Caco-2 (cell line): ENCODE measurements at regions of chr19 and their contacts with region 1.

Region 1: GRCh38 chr19:57819475-57820148 is 4.9 kb upstream of the ZNF552 start:
- DNase-seq: peak; percentile 89 to 95
- H3K4me3 ChIP-seq: peak overlapping the region; percentile 48
- H3K4me3 Mint-ChIP-seq: peak overlapping the region; percentile 98
- H3K27ac Mint-ChIP-seq: peak overlapping the region; percentile 94
- H3K4me1 ChIP-seq: peaks cover 59% of the 10 kb centered on the region
- H3K4me1 Mint-ChIP-seq: peaks cover 62% of the 10 kb centered on the region
- H3K27me3 ChIP-seq: no peaks in the 10 kb centered on the region
- H3K27me3 Mint-ChIP-seq: no peaks in the 10 kb centered on the region
- CTCF ChIP-seq: peak in 1 of 2 experiments; percentile 16

Region 2: DNA sequence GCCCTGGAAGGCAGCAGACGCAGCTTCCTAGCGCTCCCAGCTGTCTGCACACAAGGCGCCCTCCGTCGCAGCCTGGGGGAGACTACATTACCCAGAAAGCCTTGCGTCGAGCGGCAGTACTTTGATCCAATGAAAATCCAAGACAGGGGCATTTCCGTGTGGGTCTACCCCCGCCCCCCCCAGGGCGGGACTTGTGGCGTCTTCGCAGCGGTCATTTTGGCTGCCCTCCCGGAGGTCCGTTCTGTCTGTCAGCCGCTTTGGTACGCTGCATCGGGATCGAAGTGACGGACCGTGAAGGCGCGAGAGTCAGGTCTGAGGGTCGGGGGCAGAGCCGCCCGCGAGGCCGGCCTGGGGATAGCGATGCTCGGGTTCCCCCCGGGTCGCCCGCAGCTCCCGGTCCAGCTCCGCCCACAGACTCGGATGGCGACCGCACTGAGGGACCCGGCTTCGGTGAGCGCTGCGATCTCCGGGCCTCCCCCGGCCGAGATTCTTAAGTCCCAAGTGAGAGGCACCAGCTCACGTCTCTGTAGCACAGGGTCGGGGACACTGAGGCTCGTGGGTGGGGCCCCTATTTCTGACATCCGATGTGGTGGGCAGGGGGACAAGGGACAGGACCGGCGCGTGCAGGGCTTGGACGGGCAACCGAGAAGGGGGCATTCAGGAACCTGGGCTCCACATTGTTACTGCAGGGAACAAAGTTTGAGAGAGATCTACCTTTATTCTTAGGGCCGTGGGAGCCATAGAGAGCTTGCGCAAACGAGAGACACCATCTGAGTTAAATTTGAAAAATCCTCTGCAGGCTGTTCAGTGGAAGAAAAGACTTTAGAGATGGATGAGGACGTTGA is 186.4 kb before region 1 on chr19 and contains the start of gene ZNF211:
- CTCF ChIA-PET with region 1: no interaction called
- POLR2A ChIA-PET with region 1: no interaction called
- intact Hi-C with region 1: no loop called
- DNase-seq: peak; percentile 94
- H3K4me3 ChIP-seq: peak within 1 kb of the TSS; percentile 95
- H3K4me3 Mint-ChIP-seq: peak within 1 kb of the TSS; percentile 86
- H3K27ac Mint-ChIP-seq: peak within 1 kb of the TSS; percentile 81
- H3K4me1 ChIP-seq: 0 out of 2 replicates have a peak, but pooled peaks cover 7% of the 10 kb centered on the region
- H3K4me1 Mint-ChIP-seq: peaks cover 12% of the 10 kb centered on the region
- H3K27me3 ChIP-seq: no peaks in the 10 kb centered on the region
- H3K27me3 Mint-ChIP-seq: no peaks in the 10 kb centered on the region
- CTCF ChIP-seq: no peak
- total RNA-seq, gene ZNF211: 10.5 and 13.3 TPM in 2 replicates

Region 3: GRCh38 chr19:57689750-57690149 is 129.9 kb before region 1 on chr19:
- CTCF ChIA-PET with region 1: no interaction called
- POLR2A ChIA-PET with region 1: no interaction called
- intact Hi-C with region 1: no loop called
- DNase-seq: no peak
- H3K4me3 ChIP-seq: no peak overlapping the region
- H3K4me3 Mint-ChIP-seq: no peak overlapping the region
- H3K27ac Mint-ChIP-seq: no peak overlapping the region
- H3K4me1 ChIP-seq: no peaks in the 10 kb centered on the region
- H3K4me1 Mint-ChIP-seq: no peaks in the 10 kb centered on the region
- H3K27me3 ChIP-seq: no peaks in the 10 kb centered on the region
- H3K27me3 Mint-ChIP-seq: no peaks in the 10 kb centered on the region
- CTCF ChIP-seq: no peak

Region 4: DNA sequence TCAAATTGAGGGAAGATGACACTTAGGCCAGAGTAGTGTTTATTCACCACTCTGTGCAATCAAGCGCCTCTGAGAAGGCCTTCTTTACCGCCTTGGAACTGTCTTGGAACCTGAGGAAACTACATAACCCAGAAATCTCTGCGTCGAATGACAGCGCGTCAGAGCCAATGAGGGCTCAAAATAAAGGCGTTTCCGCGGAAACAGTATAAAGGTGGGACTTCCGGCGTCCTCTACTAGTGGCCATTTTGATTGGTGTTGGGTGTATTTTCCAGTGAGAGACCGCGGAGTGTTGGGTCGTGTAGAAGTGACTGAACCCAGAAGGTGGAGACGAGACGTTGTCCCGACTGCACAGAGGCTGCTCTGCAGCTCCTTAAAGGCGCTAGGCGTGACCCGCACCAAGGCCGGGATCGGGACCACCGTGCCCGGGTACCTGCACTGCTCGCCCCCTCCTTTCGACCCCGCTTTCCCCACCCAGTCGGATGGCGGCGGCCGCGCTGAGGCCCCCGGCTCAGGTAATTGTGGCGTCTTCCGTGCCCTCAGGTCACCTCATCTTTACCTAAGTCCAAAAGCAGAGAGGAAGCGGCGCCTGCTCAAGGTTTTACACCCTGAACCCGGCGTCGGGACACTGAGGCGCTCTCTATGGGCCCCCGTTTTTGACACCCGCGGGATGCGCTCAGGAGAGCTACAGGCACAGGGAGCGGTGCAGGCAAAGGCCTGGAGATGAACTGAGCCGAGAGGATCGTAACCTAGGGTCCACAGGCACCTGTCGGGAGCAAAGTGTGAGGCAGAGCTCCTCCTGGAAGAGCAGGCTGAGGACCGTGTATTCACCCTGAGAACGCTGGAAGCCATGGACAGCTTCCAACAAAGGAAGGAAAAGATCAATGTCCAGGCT is 72.8 kb before region 1 on chr19 and contains the start of gene ZNF776:
- CTCF ChIA-PET with region 1: no interaction called
- POLR2A ChIA-PET with region 1: interaction called, 7 read pairs
- intact Hi-C with region 1: loop called (anchors 5 kb)
- DNase-seq: peak; percentile 86 to 89
- H3K4me3 ChIP-seq: peak within 1 kb of the TSS; percentile 100
- H3K4me3 Mint-ChIP-seq: peak within 1 kb of the TSS; percentile 100
- H3K27ac Mint-ChIP-seq: peak within 1 kb of the TSS; percentile 99
- H3K4me1 ChIP-seq: peaks cover 4% of the 10 kb centered on the region; the same call in 1 of the 2 replicates
- H3K4me1 Mint-ChIP-seq: peaks cover 12% of the 10 kb centered on the region
- H3K27me3 ChIP-seq: no peaks in the 10 kb centered on the region
- H3K27me3 Mint-ChIP-seq: no peaks in the 10 kb centered on the region
- CTCF ChIP-seq: no peak
- total RNA-seq, gene ZNF776: 15.6 and 16.0 TPM in 2 replicates

Region 5: GRCh38 chr19:57786291-57786690 is 33.3 kb before region 1 on chr19:
- CTCF ChIA-PET with region 1: no interaction called
- POLR2A ChIA-PET with region 1: no interaction called
- intact Hi-C with region 1: no loop called
- DNase-seq: no peak
- H3K4me3 ChIP-seq: no peak overlapping the region
- H3K4me3 Mint-ChIP-seq: no peak overlapping the region
- H3K27ac Mint-ChIP-seq: no peak overlapping the region
- H3K4me1 ChIP-seq: no peaks in the 10 kb centered on the region
- H3K4me1 Mint-ChIP-seq: no peaks in the 10 kb centered on the region
- H3K27me3 ChIP-seq: no peaks in the 10 kb centered on the region
- H3K27me3 Mint-ChIP-seq: no peaks in the 10 kb centered on the region
- CTCF ChIP-seq: no peak

Region 6: GRCh38 chr19:57850553-57851017 is 31.0 kb after region 1 on chr19:
- CTCF ChIA-PET with region 1: interaction called, 4 read pairs
- POLR2A ChIA-PET with region 1: interaction called, 7 read pairs
- intact Hi-C with region 1: loop called (anchors 2 kb)
- DNase-seq: peak; percentile 59 to 73
- H3K4me3 ChIP-seq: peak overlapping the region; percentile 44
- H3K4me3 Mint-ChIP-seq: peak overlapping the region; percentile 99
- H3K27ac Mint-ChIP-seq: peak overlapping the region; percentile 99
- H3K4me1 ChIP-seq: peaks cover 12% of the 10 kb centered on the region
- H3K4me1 Mint-ChIP-seq: peaks cover 17% of the 10 kb centered on the region
- H3K27me3 ChIP-seq: no peaks in the 10 kb centered on the region
- H3K27me3 Mint-ChIP-seq: no peaks in the 10 kb centered on the region
- CTCF ChIP-seq: no peak

Region 7: GRCh38 chr19:57914531-57914930 is 94.9 kb after region 1 on chr19:
- CTCF ChIA-PET with region 1: interaction called, 5 read pairs
- POLR2A ChIA-PET with region 1: interaction called, 4 read pairs
- intact Hi-C with region 1: loop called (anchors 10 kb)
- DNase-seq: no peak
- H3K4me3 ChIP-seq: no peak overlapping the region
- H3K4me3 Mint-ChIP-seq: peak overlapping the region; percentile 39
- H3K27ac Mint-ChIP-seq: no peak overlapping the region
- H3K4me1 ChIP-seq: 0 out of 2 replicates have a peak, but pooled peaks cover 3% of the 10 kb centered on the region
- H3K4me1 Mint-ChIP-seq: peaks cover 11% of the 10 kb centered on the region
- H3K27me3 ChIP-seq: no peaks in the 10 kb centered on the region
- H3K27me3 Mint-ChIP-seq: no peaks in the 10 kb centered on the region
- CTCF ChIP-seq: no peak